ENCODE measurements at regions of chr9 and their contacts with region 1.

Region 1: GRCh38 chr9:69078581-69078980 is 43.0 kb downstream of the FXN start:
- DNase-seq: peak; percentile 80
- H3K4me3 ChIP-seq: no peak overlapping the region
- H3K27ac ChIP-seq: no peak overlapping the region
- H3K4me1 ChIP-seq: peaks cover 19% of the 10 kb centered on the region
- H3K27me3 ChIP-seq: no peaks in the 10 kb centered on the region
- CTCF ChIP-seq: no peak
- POLR2A ChIP-seq: no peak

Region 2: DNA sequence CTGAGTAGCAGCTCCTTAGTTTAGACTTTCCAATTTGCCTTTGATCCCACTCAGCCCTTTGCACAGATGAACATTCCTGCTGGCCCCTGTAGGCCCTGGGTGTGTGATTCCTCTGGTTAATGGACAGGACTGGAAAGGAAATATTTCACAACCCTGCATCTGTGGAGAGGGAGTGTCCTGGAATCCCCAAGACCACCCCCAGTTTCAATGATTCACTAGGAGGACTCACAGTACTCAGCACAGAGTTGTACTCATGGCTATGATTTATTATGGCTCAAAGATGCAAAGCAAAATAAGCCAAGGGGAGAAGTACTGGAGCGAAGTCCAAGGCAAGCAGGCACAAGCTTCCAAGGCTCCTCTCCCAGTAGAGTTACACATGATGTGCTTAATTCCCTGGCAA is 53.1 kb after region 1 on chr9:
- intact Hi-C with region 1: loop called (anchors 10 kb)
- DNase-seq: peak; percentile 46
- H3K4me3 ChIP-seq: no peak overlapping the region
- H3K27ac ChIP-seq: no peak overlapping the region
- H3K4me1 ChIP-seq: peaks cover 14% of the 10 kb centered on the region
- H3K27me3 ChIP-seq: no peaks in the 10 kb centered on the region
- CTCF ChIP-seq: no peak
- POLR2A ChIP-seq: no peak

Region 3: DNA sequence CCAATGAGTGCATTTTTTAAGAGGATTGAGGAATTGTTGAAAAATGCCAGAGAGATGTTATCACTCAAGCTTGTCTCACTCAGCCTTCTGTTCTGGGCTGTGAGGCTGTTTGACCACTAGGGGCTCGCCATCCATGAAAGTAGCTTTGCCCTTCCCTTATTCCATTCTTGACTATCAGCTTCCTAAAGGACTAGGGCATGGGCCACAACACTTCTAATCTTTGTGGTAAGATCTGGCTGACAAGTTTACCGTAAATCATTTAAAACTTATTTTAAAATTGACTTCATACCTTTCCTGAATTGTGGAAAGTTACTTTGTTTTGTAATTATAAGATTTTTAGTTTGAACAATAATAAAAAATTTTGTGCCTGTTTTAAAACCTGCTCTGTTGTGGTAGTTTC is 145.0 kb after region 1 on chr9:
- intact Hi-C with region 1: no loop called
- DNase-seq: peak; percentile 49
- H3K4me3 ChIP-seq: no peak overlapping the region
- H3K27ac ChIP-seq: no peak overlapping the region
- H3K4me1 ChIP-seq: no peaks in the 10 kb centered on the region
- H3K27me3 ChIP-seq: no peaks in the 10 kb centered on the region
- CTCF ChIP-seq: peak in 2 of 3 experiments; percentile 41 to 55
- POLR2A ChIP-seq: no peak